Activated naive CD4-positive, alpha-beta T cell treated with anti-CD3 and anti-CD28 coated beads for 36 hours (primary cell): ENCODE measurements at regions of chrX and their contacts with region 1.

Region 1: GRCh38 chrX:13167481-13168231 is 123.2 kb upstream of the FAM9C start:
- DNase-seq: peak; percentile 37
- H3K4me3 Mint-ChIP-seq: peak overlapping the region; percentile 45
- H3K27ac Mint-ChIP-seq: peak overlapping the region; percentile 82
- H3K4me1 Mint-ChIP-seq: peaks cover 18% of the 10 kb centered on the region
- H3K27me3 Mint-ChIP-seq: no peaks in the 10 kb centered on the region

Region 2: DNA sequence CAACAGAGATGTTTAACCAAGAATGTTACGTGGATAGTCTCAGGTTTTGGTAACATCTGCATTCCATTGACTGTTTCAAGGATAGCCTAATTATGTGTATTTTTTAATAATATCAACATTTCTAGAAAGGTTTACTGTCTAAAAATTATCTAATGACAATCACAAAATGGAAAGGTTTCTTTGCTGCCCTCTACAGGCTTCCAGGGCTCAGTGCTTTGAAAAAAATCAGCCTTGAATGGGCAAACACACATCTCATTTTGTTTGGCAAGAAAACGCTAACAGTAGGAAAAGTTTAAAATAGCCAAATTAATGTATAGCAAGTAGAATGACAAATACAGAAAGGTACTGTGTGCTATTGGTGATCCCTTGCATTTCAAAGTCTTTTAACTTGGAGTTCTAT is 599.8 kb before region 1 on chrX:
- CTCF ChIA-PET with region 1: no interaction called
- intact Hi-C with region 1: no loop called
- DNase-seq: no peak
- H3K4me3 Mint-ChIP-seq: no peak overlapping the region
- H3K27ac Mint-ChIP-seq: no peak overlapping the region
- H3K4me1 Mint-ChIP-seq: no peaks in the 10 kb centered on the region
- H3K27me3 Mint-ChIP-seq: no peaks in the 10 kb centered on the region

Region 3: DNA sequence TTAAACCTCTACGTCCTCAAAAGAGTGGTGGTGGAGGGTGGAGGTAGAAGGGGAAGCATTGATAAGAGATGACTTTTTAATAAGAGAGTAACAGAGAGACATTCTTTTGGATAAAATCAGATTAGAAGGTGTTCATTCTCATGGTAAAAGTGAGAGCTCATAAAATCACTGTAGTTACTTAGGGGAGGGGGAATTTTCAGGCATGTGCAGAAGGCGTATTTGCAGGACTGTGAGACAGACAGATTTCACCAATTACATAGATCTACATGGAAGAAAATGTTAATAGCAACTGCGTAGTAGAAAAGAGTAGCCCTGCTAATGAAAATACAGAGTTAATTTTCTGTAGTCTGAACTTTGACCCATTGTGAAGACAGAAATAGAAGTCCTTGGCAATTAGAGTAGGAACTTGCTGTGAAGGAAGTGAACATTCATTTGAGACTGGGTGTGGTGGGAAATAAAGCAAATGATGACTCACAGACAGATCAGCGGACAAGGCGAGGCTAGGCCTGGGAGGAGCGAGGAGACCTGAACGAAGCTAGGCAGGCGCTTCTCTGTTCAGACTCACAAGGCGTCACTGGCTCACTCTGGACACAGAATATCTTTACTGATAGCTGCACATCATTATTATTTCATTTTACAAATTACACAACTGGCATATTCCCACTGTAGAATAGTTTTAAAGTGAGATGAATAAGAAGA is 66.1 kb before region 1 on chrX:
- CTCF ChIA-PET with region 1: no interaction called
- intact Hi-C with region 1: loop called (anchors 2 kb)
- DNase-seq: peak; percentile 66
- H3K4me3 Mint-ChIP-seq: no peak overlapping the region
- H3K27ac Mint-ChIP-seq: peak overlapping the region; percentile 11
- H3K4me1 Mint-ChIP-seq: peaks cover 53% of the 10 kb centered on the region
- H3K27me3 Mint-ChIP-seq: no peaks in the 10 kb centered on the region

Region 4: GRCh38 chrX:13123857-13124345 is 43.8 kb before region 1 on chrX:
- CTCF ChIA-PET with region 1: no interaction called
- intact Hi-C with region 1: loop called (anchors 1 kb)
- DNase-seq: peak; percentile 6
- H3K4me3 Mint-ChIP-seq: peak overlapping the region; percentile 39
- H3K27ac Mint-ChIP-seq: peak overlapping the region; percentile 70
- H3K4me1 Mint-ChIP-seq: peaks cover 49% of the 10 kb centered on the region
- H3K27me3 Mint-ChIP-seq: no peaks in the 10 kb centered on the region

Region 5: GRCh38 chrX:13142891-13143290 is 24.8 kb before region 1 on chrX:
- CTCF ChIA-PET with region 1: no interaction called
- intact Hi-C with region 1: no loop called
- DNase-seq: no peak
- H3K4me3 Mint-ChIP-seq: no peak overlapping the region
- H3K27ac Mint-ChIP-seq: no peak overlapping the region
- H3K4me1 Mint-ChIP-seq: peaks cover 6% of the 10 kb centered on the region
- H3K27me3 Mint-ChIP-seq: no peaks in the 10 kb centered on the region

Region 6: DNA sequence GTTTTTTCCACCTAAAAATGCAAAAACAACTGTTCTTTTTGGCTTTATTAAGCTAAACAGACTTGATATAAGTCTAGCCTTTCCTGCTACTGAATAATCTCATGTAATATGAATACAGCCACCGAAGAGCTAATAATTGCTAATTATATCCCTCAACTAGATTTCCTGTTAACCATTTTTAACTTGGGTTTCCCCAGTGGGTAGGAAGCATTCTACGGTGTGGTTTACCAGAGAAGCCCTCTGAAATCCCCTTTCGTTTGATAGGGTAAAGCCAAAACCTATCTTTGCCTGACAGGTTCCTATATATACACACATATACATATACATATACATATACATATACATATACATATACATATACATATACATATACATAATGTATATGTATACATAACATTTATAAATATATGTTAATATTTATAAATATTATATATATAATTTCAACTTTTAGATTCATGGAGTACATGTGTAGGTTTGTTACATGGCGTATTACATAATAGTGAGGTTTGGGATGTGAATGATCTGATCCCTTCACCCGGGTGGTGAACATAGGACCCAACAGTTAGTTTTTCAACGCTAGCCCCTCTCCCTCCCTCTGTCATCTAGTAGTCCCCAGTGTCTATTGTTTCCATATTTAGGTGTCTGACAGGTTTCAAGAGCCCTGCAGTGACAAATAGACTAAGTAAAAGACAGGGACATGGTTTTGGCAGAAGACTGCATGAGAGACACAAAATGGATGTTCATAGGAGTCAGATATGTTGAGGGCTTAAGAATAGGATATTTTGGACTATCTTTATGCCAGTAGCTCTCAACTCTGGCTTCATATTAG is 89.8 kb after region 1 on chrX:
- CTCF ChIA-PET with region 1: no interaction called
- intact Hi-C with region 1: loop called (anchors 5 kb)
- DNase-seq: peak; percentile 17
- H3K4me3 Mint-ChIP-seq: no peak overlapping the region
- H3K27ac Mint-ChIP-seq: no peak overlapping the region
- H3K4me1 Mint-ChIP-seq: peaks cover 29% of the 10 kb centered on the region
- H3K27me3 Mint-ChIP-seq: no peaks in the 10 kb centered on the region

Region 7: DNA sequence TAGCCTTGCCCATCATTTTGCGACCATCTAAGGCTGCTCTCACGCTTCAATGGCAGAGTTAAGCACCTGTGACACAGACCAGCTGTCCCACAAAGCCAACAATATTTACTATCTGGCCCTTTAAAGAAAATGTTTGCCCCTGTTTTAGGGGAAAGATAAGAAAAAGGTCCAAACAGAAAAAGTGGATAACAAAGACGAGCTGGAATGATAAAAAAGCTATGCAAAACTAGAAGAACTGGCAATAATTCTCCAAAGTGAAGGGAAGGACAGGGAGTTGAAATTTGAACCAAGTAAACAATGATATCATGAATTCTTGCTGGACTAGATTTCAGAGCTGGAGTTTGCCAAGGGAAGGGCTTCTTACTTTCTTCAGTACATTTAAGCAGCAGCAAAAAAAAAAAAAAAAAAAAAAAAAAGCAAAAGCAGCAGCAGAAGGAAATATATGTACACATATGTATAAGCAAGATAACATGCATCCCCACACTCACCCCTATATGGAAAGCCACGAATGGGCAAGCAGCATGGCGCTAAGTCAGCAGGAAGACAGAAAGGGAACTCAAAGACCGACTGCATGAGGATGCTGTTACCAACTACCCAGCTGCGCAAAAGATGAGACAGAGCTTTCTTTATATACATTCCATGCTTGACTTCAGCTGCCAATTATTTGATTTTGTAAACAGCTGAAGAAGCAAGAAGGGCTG is 554.3 kb after region 1 on chrX:
- CTCF ChIA-PET with region 1: no interaction called
- intact Hi-C with region 1: no loop called
- DNase-seq: no peak
- H3K4me3 Mint-ChIP-seq: no peak overlapping the region
- H3K27ac Mint-ChIP-seq: no peak overlapping the region
- H3K4me1 Mint-ChIP-seq: peaks cover 44% of the 10 kb centered on the region
- H3K27me3 Mint-ChIP-seq: no peaks in the 10 kb centered on the region